ENCODE measurements at regions of chr12 and their contacts with region 1.

Region 1: DNA sequence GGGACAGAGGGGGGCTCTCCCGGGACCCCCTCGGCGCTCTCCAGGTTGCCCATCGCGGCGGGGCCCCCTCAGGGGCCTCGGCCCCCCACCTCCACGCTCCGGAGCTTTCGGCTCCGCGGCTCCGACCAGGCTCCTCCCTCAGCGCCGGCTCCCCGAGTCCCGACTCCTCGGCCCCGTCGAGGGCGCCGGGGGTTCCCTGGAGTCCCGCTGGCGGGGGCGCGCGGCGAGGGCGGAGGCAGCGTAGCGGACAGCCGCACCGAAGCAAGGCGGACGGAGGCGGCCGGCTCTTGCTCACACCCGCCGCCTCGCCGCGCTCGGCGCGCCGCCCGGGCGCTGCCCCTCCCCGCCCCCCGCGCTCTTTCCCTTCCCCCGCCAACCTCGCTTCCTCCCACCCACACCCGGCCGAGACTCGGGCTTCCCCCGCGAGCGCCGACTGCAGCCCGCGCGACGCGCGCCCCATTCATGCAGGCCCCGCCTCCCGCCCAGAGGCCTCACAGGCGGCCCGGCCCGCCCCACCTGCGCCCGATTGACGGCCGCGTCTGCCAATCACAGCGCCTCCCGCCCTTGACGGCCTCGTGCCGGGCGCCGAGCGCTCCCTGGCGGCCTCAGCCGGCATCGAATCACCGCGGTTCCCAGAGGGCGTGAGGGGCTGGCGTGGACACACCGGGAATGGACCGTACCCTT is at the start of gene FMNL3:
- DNase-seq: peak; percentile 99
- ATAC-seq: peak; percentile 92
- H3K4me3 Mint-ChIP-seq: peak within 1 kb of the TSS; percentile 92
- H3K27ac Mint-ChIP-seq: peak within 1 kb of the TSS; percentile 83
- H3K4me1 Mint-ChIP-seq: peaks cover 43% of the 10 kb centered on the region
- H3K27me3 Mint-ChIP-seq: peaks cover 5% of the 10 kb centered on the region
- total RNA-seq, gene FMNL3: 23.2 to 24.3 TPM

Region 2: DNA sequence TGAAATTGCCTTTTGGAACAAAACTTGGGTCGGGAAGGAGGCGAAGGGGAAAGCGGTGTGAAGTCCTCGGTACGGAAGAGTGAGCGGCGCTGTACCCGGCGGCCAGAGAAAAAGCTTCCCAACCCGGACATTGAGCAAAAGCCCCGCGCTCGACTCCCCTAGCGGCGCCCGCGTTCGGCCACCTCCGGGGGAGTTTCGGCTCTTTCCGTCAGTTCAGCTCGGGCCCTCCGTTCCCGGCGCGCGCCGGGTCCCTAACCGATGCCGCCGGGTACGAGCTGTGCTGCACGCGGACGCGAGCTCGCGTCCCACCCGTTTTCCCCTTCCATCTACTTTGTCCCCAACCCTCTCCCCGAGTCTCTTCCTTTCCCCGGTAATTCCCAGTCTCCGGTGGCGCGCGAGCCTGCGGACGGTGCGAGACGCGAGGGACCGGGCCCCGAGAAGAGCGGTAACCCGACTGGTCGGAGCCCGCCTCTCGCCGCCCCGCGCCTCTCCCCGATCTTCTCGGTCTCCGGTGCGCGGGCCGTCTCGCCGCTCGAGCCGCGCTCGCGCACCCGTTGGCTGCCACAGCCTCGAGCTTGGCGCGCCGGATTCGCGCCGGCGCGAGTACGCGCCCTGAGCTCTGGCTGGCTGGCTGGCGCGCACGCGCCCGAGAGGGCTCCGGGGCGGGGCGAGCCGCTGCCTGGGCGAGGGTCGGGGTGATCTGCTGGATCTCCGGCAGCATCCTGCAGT is 340.5 kb before region 1 on chr12:
- CTCF ChIA-PET with region 1: no interaction called
- POLR2A ChIA-PET with region 1: interaction called, 6 read pairs
- intact Hi-C with region 1: loop called in 1 of 2 experiments (anchors 1 kb)
- DNase-seq: peak; percentile 94
- ATAC-seq: peak; percentile 86
- H3K4me3 Mint-ChIP-seq: peak overlapping the region; percentile 97
- H3K27ac Mint-ChIP-seq: peak overlapping the region; percentile 99
- H3K4me1 Mint-ChIP-seq: peaks cover 25% of the 10 kb centered on the region
- H3K27me3 Mint-ChIP-seq: no peaks in the 10 kb centered on the region

Region 3: DNA sequence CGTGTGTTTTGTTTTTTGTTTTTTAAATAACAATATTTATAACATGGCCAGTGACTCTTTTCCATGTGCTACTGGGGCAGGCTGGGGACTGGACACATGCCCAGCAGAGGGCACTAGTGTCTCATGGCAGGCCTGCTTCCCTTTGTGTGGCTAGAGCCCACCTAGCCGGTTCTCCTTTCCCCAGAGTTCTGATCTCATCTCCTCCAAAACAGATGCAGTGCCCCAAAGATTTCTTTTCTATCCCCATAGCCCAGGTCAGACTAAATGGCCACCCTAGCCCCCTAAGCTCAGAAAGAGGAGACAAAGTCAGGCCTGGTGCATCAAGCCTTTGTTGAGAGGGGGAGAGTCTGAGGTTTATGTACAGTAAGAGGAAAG is 62.7 kb before region 1 on chr12:
- CTCF ChIA-PET with region 1: interaction called, 332 read pairs
- POLR2A ChIA-PET with region 1: interaction called, 3 read pairs
- intact Hi-C with region 1: loop called (anchors 1 kb)
- DNase-seq: peak; percentile 89
- ATAC-seq: peak; percentile 93
- H3K4me3 Mint-ChIP-seq: no peak overlapping the region
- H3K27ac Mint-ChIP-seq: peak overlapping the region; percentile 78
- H3K4me1 Mint-ChIP-seq: peaks cover 18% of the 10 kb centered on the region
- H3K27me3 Mint-ChIP-seq: no peaks in the 10 kb centered on the region

Region 4: DNA sequence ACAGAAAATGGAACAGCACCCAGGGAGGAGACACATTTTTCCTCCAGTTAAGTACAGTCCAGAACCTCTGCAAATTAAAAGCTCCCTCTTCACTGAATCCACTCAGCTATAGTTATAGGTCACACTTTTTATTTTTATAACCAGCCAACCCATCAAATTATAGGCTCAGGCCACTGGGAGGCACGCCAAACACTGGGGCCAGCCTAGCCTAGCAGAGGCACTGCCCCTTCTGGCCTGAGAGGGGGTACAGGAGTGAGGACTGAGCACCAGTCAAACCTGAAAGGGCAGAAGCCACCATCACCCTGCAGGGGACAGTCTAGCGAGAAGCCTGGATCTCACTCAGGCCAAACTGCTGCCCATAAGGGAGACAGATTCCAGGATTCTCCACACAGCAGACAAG is 19.3 kb before region 1 on chr12:
- CTCF ChIA-PET with region 1: interaction called, 38 read pairs
- POLR2A ChIA-PET with region 1: interaction called, 9 read pairs
- intact Hi-C with region 1: no loop called
- DNase-seq: no peak
- ATAC-seq: no peak
- H3K4me3 Mint-ChIP-seq: no peak overlapping the region
- H3K27ac Mint-ChIP-seq: no peak overlapping the region
- H3K4me1 Mint-ChIP-seq: peaks cover 54% of the 10 kb centered on the region
- H3K27me3 Mint-ChIP-seq: no peaks in the 10 kb centered on the region

Region 5: DNA sequence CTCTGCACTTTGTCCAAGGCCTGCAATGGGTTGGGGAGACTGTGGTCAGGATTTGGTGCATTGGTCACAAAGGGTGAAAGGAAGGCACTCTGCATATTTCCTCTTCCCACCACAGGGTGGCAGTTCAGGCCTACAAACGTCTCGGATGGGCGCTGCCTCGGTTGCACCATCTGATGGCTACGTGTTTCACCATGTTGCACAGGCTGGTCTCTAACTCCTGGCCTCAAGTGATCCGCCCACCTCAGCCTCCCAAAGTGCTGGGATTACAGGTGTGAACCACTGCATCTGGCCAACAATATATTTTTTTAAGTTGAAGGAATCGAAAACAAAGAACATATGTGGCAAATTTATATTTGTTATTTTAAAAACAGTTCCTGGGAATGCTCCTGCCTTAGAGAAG is 69.1 kb after region 1 on chr12:
- CTCF ChIA-PET with region 1: interaction called, 8 read pairs
- POLR2A ChIA-PET with region 1: no interaction called
- intact Hi-C with region 1: loop called in 1 of 2 experiments (anchors 1 kb)
- DNase-seq: peak; percentile 84
- ATAC-seq: peak; percentile 93
- H3K4me3 Mint-ChIP-seq: no peak overlapping the region
- H3K27ac Mint-ChIP-seq: no peak overlapping the region
- H3K4me1 Mint-ChIP-seq: peaks cover 14% of the 10 kb centered on the region
- H3K27me3 Mint-ChIP-seq: peaks cover 10% of the 10 kb centered on the region